ENCODE measurements at regions of chr10 and their contacts with region 1.

Region 1: GRCh38 chr10:18312374-18313139 is 172.3 kb downstream of the CACNB2 start:
- DNase-seq: peak in 1 of 5 donors; percentile 19
- ATAC-seq: peak; percentile 69 to 82 (median 74)
- H3K4me3 ChIP-seq: peak overlapping the region in 2 of 12 donors; percentile 6 to 7
- H3K27ac ChIP-seq: peak overlapping the region; percentile 61 to 92 (median 82)
- H3K4me1 ChIP-seq: peaks cover 0 to 25% (median 2%) of the 10 kb centered on the region in 12 donors
- H3K27me3 ChIP-seq: no peaks in the 10 kb centered on the region
- CTCF ChIP-seq: peak in 11 of 12 donors; percentile 27 to 63 (median 42)
- POLR2A ChIP-seq: no peak

Region 2: GRCh38 chr10:18140149-18140956 is 172.2 kb before region 1 on chr10 and contains the start of gene CACNB2:
- intact Hi-C with region 1: loop called in 2 of 10 experiments (anchors 5 to 10 kb)
- DNase-seq: peak; percentile 69 to 86 (median 81)
- ATAC-seq: peak; percentile 48 to 82 (median 76)
- H3K4me3 ChIP-seq: peak within 1 kb of the TSS; percentile 48 to 90 (median 62)
- H3K27ac ChIP-seq: peak within 1 kb of the TSS; percentile 55 to 93 (median 79)
- H3K4me1 ChIP-seq: peaks cover 0 to 18% (median 3%) of the 10 kb centered on the region in 12 donors
- H3K27me3 ChIP-seq: peaks cover 0 to 36% (median 0%) of the 10 kb centered on the region in 9 donors
- CTCF ChIP-seq: peak in 2 of 12 donors; percentile 4 to 24
- POLR2A ChIP-seq: no peak
- total RNA-seq, gene CACNB2: 28.2 to 63.2 (median 35.9) TPM

Region 3: GRCh38 chr10:18233775-18234174 is 78.8 kb before region 1 on chr10:
- intact Hi-C with region 1: loop called in 2 of 10 experiments (anchors 2 to 5 kb)
- DNase-seq: peak; percentile 63 to 87 (median 84)
- ATAC-seq: peak; percentile 87 to 91 (median 89)
- H3K4me3 ChIP-seq: no peak overlapping the region
- H3K27ac ChIP-seq: peak overlapping the region in 2 of 12 donors; percentile 15 to 26
- H3K4me1 ChIP-seq: peaks cover 0 to 18% (median 3%) of the 10 kb centered on the region in 12 donors
- H3K27me3 ChIP-seq: no peaks in the 10 kb centered on the region
- CTCF ChIP-seq: peak; percentile 16 to 58 (median 35)
- POLR2A ChIP-seq: no peak

Region 4: DNA sequence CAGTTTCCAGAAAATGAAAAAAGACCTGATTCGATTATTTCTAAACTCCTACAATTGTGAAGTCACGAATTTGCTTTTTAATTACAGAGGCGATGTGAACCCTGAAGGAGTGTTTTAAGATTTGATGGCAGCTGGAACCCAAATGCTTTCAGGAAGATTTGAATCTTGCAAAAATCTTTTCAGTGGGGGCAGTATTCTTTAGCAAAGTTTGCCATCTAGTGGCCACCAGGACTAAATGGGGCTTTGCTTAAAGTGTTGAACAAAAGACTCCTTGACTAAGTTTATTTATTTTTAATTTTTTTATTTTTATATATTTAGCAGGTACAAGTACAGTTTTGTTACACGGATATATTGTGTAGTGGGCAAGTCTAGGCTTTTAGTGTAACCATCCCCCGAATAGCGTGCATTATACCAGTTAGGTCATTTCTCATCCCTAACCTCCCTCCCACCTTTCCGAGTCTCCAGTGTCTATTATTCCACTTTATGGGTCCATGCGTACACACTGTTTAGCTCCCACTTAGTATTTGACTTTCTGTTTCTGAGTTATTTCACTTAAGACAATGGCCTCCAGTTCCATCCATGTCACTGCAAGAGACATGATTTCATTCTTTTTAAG is 73.6 kb before region 1 on chr10:
- intact Hi-C with region 1: loop called in 2 of 10 experiments (anchors 2 to 5 kb)
- DNase-seq: no peak
- ATAC-seq: no peak
- H3K4me3 ChIP-seq: no peak overlapping the region
- H3K27ac ChIP-seq: peak overlapping the region in 1 of 12 donors; percentile 34
- H3K4me1 ChIP-seq: peaks cover 0 to 14% (median 3%) of the 10 kb centered on the region in 12 donors
- H3K27me3 ChIP-seq: no peaks in the 10 kb centered on the region
- CTCF ChIP-seq: peak; percentile 27 to 73 (median 60)
- POLR2A ChIP-seq: no peak

Region 5: GRCh38 chr10:18472977-18473376 is 160.4 kb after region 1 on chr10:
- intact Hi-C with region 1: loop called in 1 of 10 experiments (anchors 10 kb)
- DNase-seq: peak in 2 of 5 donors; percentile 25 to 53
- ATAC-seq: peak in 3 of 4 donors; percentile 7 to 52 (median 40)
- H3K4me3 ChIP-seq: peak overlapping the region in 2 of 12 donors; percentile 9 to 16
- H3K27ac ChIP-seq: peak overlapping the region; percentile 76 to 93 (median 85)
- H3K4me1 ChIP-seq: peaks cover 0 to 36% (median 14%) of the 10 kb centered on the region in 12 donors
- H3K27me3 ChIP-seq: no peaks in the 10 kb centered on the region
- CTCF ChIP-seq: peak in 7 of 12 donors; percentile 10 to 39 (median 27)
- POLR2A ChIP-seq: no peak

Region 6: GRCh38 chr10:18955061-18955460 is 642.5 kb after region 1 on chr10:
- intact Hi-C with region 1: no loop called
- DNase-seq: no peak
- ATAC-seq: no peak
- H3K4me3 ChIP-seq: no peak overlapping the region
- H3K27ac ChIP-seq: no peak overlapping the region
- H3K4me1 ChIP-seq: no peaks in the 10 kb centered on the region
- H3K27me3 ChIP-seq: no peaks in the 10 kb centered on the region
- CTCF ChIP-seq: no peak
- POLR2A ChIP-seq: no peak

Measured in heart left ventricle (tissue), 16 donors.